ENCODE measurements at regions of chr4 and their contacts with region 1.

Region 1: DNA sequence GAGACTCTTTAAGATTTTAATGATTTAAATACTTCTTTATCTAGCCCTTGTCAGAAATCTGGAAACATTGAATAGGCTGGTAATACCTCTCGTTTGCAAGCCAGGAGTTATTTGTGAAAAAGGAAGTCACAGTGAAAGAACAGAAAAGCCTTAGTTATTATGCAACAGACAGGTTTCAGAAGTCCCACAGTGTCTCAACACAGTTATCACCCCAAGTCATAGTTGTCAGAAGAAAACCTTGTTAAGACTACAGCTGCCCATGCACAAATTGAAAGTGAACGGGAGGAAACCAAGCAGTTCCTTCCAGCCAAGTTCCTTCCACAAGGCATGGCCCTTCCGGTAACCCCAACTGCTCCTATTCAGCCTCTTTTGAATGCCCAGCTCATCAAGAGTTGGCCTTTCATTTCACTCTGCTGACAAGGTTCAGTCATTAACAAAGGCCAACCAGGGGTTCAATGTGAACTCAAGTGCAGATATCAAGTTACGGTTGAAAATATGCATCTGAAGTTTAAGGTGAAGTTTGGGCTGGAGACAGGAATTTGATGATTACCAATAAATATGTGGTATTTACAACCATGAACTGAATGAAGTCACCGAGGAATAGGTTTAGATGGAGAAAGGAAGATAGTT is 15.6 kb downstream of the ALPK1 start:
- DNase-seq: peak; percentile 74
- CTCF ChIP-seq: no peak

Region 2: DNA sequence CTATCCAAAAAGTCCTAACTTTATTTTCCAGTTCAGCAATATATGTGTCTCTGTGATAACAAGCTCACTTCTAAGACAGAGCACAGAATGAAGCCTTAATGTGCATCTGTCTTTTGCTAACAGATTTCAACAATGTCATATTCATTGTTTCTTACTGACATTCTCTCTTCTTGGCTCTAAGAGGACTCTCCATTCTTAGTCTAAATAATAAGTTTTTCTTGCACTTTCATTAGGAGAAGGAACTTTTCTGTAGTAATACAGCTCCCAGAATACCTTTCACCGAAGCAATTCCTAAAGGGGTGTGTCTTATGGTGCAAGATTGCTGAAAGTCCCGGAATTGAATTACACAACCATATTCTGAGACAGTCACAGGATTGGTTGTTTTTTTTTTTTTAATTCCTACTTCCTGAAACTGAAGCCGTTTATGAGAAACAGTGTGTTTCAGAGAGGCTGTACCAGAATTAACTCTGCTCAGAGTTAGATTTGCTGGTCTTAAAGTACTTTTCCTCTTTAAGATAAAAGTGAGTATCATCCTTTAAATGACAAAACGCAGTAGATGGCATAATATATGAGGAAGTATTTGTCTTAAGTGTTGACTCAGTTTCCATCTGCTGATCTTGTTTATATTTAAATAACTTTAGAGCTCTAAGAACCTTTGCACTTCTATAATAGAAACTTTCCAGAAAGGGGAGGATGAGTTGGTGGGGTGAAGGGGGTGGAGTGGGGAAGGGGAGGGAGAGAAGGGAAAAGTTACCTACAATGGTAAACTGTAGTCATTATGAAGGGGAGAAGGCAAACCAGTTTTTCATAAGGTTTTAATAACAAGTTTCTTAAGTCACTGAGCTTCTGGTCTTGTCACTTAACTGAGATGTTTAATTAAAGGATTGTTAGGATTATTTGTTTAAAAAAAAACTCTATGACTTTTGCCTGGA is 15.5 kb before region 1 on chr4 and contains the start of gene ALPK1:
- CTCF ChIA-PET with region 1: interaction called, 11 read pairs
- POLR2A ChIA-PET with region 1: no interaction called
- DNase-seq: no peak
- CTCF ChIP-seq: no peak

Region 3: GRCh38 chr4:112302320-112303274 is 10.1 kb before region 1 on chr4:
- CTCF ChIA-PET with region 1: interaction called, 11 read pairs
- POLR2A ChIA-PET with region 1: no interaction called
- DNase-seq: no peak
- CTCF ChIP-seq: no peak